ENCODE measurements at regions of chr11 and their contacts with region 1.

Region 1: GRCh38 chr11:57527056-57527631 is 3.4 kb downstream of the TIMM10 start:
- DNase-seq: peak; percentile 65 to 77 (median 69)
- ATAC-seq: peak; percentile 41 to 53 (median 47)
- H3K4me3 ChIP-seq: no peak overlapping the region
- H3K27ac ChIP-seq: no peak overlapping the region
- H3K4me1 ChIP-seq: peaks cover 0 to 21% (median 0%) of the 10 kb centered on the region in 4 donors
- H3K27me3 ChIP-seq: no peaks in the 10 kb centered on the region
- CTCF ChIP-seq: peak; percentile 96
- POLR2A ChIP-seq: no peak

Region 2: GRCh38 chr11:57219021-57219627 is 308.0 kb before region 1 on chr11:
- intact Hi-C with region 1: no loop called
- DNase-seq: no peak
- ATAC-seq: peak; percentile 71 to 83 (median 74)
- H3K4me3 ChIP-seq: no peak overlapping the region
- H3K27ac ChIP-seq: no peak overlapping the region
- H3K4me1 ChIP-seq: peaks cover 0 to 7% (median 1%) of the 10 kb centered on the region in 4 donors
- H3K27me3 ChIP-seq: no peaks in the 10 kb centered on the region
- CTCF ChIP-seq: no peak
- POLR2A ChIP-seq: no peak

Region 3: GRCh38 chr11:57340039-57340615 is 187.0 kb before region 1 on chr11:
- intact Hi-C with region 1: loop called in 1 of 2 experiments (anchors 5 kb)
- DNase-seq: no peak
- ATAC-seq: peak; percentile 9 to 28 (median 18)
- H3K4me3 ChIP-seq: no peak overlapping the region
- H3K27ac ChIP-seq: no peak overlapping the region
- H3K4me1 ChIP-seq: peaks cover 0 to 4% (median 0%) of the 10 kb centered on the region in 4 donors
- H3K27me3 ChIP-seq: no peaks in the 10 kb centered on the region
- CTCF ChIP-seq: peak in 3 of 4 donors; percentile 12 to 22 (median 13)
- POLR2A ChIP-seq: no peak

Region 4: GRCh38 chr11:57480409-57481137 is 46.6 kb before region 1 on chr11:
- intact Hi-C with region 1: loop called in 1 of 2 experiments (anchors 10 kb)
- DNase-seq: peak; percentile 72 to 76 (median 73)
- ATAC-seq: peak; percentile 51 to 60 (median 52)
- H3K4me3 ChIP-seq: no peak overlapping the region
- H3K27ac ChIP-seq: peak overlapping the region in 2 of 3 donors; percentile 18 to 46
- H3K4me1 ChIP-seq: peaks cover 0 to 48% (median 15%) of the 10 kb centered on the region in 4 donors
- H3K27me3 ChIP-seq: no peaks in the 10 kb centered on the region
- CTCF ChIP-seq: peak; percentile 73 to 80 (median 75)
- POLR2A ChIP-seq: peak; percentile 4

Region 5: GRCh38 chr11:57493507-57494503 is 33.3 kb before region 1 on chr11:
- intact Hi-C with region 1: loop called (anchors 5 kb)
- DNase-seq: peak; percentile 74 to 84 (median 83)
- ATAC-seq: peak; percentile 57 to 72 (median 72)
- H3K4me3 ChIP-seq: no peak overlapping the region
- H3K27ac ChIP-seq: peak overlapping the region in 1 of 3 donors; percentile 37
- H3K4me1 ChIP-seq: peaks cover 0 to 52% (median 26%) of the 10 kb centered on the region in 4 donors
- H3K27me3 ChIP-seq: no peaks in the 10 kb centered on the region
- CTCF ChIP-seq: peak; percentile 86 to 96 (median 94)
- POLR2A ChIP-seq: no peak

Measured in right lobe of liver (tissue), 6 donors.